CD4-positive, alpha-beta T cell (primary cell): ENCODE measurements at regions of chr19 and their contacts with region 1.

Region 1: GRCh38 chr19:44723952-44724319 is 24.6 kb upstream of the BCL3 start:
- DNase-seq: peak; percentile 57 to 89 (median 76)
- ATAC-seq: peak; percentile 95
- H3K4me3 ChIP-seq: no peak overlapping the region
- H3K4me3 Mint-ChIP-seq: no peak overlapping the region
- H3K27ac ChIP-seq: no peak overlapping the region
- H3K27ac Mint-ChIP-seq: no peak overlapping the region
- H3K4me1 ChIP-seq: peaks cover 27% of the 10 kb centered on the region
- H3K4me1 Mint-ChIP-seq: peaks cover 14% of the 10 kb centered on the region
- H3K27me3 ChIP-seq: peaks cover 0 to 3% of the 10 kb centered on the region in 2 experiments
- H3K27me3 Mint-ChIP-seq: no peaks in the 10 kb centered on the region
- CTCF ChIP-seq: peak; percentile 97

Region 2: DNA sequence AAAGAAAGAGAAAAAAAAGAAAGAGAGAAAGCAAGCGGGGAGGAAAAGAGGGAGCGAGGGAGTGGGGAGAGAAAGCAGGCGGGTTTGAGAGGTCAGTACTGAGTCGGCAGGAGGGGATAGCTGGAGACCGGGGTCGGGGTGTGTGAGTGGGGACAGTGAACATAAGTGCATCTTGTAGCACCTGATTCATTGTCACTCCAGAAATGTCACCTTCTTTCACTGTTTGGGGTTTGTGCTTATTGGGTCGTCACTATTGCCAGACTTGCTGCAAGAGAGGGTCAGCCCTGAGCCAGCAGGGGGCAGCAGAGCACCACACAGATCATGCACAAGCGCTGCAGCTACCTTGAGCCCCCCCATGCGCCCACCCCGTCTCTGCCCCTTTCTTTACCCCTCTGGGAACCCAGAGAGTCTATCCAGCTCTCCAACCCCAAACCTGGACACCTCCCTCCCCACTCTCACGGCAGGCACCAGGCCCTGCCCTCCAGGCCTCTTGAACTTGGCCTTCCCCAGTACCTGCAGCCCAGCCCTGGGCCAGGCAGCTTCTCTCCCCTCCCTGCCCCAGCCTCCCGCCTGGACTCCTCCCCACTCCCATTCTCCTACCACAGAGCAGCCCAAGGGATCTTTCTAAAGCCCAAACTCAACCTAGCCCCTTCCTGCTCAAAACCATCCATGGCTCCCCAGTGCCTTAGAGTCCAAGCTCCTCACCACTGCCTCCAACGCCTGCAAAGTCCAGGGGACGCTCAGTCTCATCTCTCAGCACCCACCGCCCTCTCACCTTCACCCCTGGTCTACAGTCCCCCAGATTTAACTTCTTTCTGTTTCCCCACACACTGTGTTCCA is 34.7 kb before region 1 on chr19:
- CTCF ChIA-PET with region 1: interaction called, 49 read pairs
- POLR2A ChIA-PET with region 1: interaction called, 5 read pairs
- intact Hi-C with region 1: loop called in 1 of 2 experiments (anchors 1 kb)
- DNase-seq: peak; percentile 67 to 90 (median 76)
- ATAC-seq: peak; percentile 54
- H3K4me3 ChIP-seq: no peak overlapping the region
- H3K4me3 Mint-ChIP-seq: no peak overlapping the region
- H3K27ac ChIP-seq: no peak overlapping the region
- H3K27ac Mint-ChIP-seq: no peak overlapping the region
- H3K4me1 ChIP-seq: peaks cover 32% of the 10 kb centered on the region
- H3K4me1 Mint-ChIP-seq: peaks cover 35% of the 10 kb centered on the region
- H3K27me3 ChIP-seq: no peaks in the 10 kb centered on the region
- H3K27me3 Mint-ChIP-seq: peaks cover 23% of the 10 kb centered on the region
- CTCF ChIP-seq: peak; percentile 87

Region 3: DNA sequence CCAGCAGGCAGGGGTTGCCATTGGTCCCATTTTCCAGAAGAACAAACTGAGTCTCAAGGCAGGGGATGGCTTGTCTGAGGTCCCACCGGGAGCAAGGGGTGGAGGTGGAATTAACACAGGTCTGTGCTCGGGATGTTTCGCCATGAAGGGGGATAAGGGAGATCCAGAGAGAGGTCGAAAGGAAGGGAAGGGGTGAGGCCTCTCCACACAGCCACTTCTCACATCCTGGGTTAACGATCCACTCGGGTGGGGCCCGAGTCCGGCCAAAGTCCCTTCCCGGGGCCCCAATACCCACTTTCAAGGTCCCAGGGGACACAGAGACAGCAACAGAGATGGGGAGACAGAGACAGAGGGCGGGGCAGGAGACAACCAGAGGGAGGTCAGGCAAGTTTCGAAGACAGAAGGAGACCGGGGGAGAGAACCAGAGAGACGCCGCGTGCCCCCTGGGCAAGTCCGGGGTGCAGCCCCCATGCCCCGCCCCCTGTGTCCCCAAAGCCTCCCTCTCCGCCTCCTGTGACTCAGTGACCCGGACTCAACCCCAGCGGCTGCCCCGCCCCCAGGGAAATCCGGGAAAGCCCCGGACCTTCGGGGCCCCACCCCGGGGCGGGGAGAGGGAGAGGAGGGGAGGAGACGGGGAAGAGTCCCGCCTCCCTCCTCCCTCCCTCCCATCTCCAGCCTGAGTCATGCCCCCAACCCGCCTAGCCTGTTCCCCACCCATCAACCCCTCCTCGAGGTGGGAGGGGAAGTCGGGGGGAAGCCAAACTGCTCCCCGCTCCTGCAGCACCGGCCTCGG is 23.2 kb after region 1 on chr19:
- CTCF ChIA-PET with region 1: interaction called, 28 read pairs
- POLR2A ChIA-PET with region 1: interaction called, 3 read pairs
- intact Hi-C with region 1: loop called in 1 of 2 experiments (anchors 2 kb)
- DNase-seq: peak; percentile 67 to 96 (median 88)
- ATAC-seq: peak; percentile 74
- H3K4me3 ChIP-seq: peak overlapping the region; percentile 76
- H3K4me3 Mint-ChIP-seq: peak overlapping the region; percentile 94
- H3K27ac ChIP-seq: peak overlapping the region; percentile 90 to 92
- H3K27ac Mint-ChIP-seq: peak overlapping the region; percentile 91
- H3K4me1 ChIP-seq: peaks cover 57% of the 10 kb centered on the region
- H3K4me1 Mint-ChIP-seq: peaks cover 52% of the 10 kb centered on the region
- H3K27me3 ChIP-seq: no peaks in the 10 kb centered on the region
- H3K27me3 Mint-ChIP-seq: no peaks in the 10 kb centered on the region
- CTCF ChIP-seq: no peak

Region 4: DNA sequence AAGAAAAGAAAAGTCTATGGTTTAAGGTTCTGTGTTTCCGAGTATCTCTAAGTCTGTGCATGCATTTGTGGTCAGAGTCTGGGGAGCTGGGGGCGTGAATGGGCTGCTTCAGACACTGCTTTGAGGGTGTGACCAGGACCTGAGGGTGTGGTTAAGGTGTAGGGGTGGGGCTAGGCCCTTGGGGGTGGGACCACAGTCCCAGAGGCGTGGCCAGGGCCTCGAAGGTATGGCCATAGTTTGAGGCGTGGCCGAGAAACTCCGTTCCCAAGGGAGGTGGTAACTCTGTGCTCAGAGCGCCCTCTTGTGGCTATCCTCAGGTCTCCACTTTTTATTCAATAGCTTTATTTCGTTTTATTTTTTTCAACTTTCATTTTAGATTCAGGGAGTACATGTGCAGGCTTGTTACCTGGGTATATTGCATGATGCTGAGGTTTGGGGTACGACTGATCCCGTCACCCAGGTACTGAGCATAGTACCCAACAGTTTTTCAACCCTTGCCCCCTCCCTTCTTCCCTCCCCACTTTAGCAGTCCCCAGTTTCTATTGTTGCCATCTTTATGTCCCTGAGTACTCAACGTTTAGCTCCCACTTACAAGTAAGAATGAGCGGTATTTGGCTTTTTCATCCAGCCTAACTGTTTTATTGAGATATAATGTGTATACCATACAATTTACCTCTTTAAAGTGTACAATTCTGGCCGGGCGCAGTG is 46.8 kb after region 1 on chr19:
- CTCF ChIA-PET with region 1: interaction called, 325 read pairs
- POLR2A ChIA-PET with region 1: interaction called, 52 read pairs
- intact Hi-C with region 1: loop called (anchors 1 kb)
- DNase-seq: peak; percentile 95 to 99 (median 98)
- ATAC-seq: peak; percentile 99
- H3K4me3 ChIP-seq: no peak overlapping the region
- H3K4me3 Mint-ChIP-seq: peak overlapping the region; percentile 40
- H3K27ac ChIP-seq: no peak overlapping the region
- H3K27ac Mint-ChIP-seq: peak overlapping the region; percentile 65
- H3K4me1 ChIP-seq: peaks cover 21% of the 10 kb centered on the region
- H3K4me1 Mint-ChIP-seq: peaks cover 14% of the 10 kb centered on the region
- H3K27me3 ChIP-seq: no peaks in the 10 kb centered on the region
- H3K27me3 Mint-ChIP-seq: no peaks in the 10 kb centered on the region
- CTCF ChIP-seq: peak; percentile 73

Region 5: DNA sequence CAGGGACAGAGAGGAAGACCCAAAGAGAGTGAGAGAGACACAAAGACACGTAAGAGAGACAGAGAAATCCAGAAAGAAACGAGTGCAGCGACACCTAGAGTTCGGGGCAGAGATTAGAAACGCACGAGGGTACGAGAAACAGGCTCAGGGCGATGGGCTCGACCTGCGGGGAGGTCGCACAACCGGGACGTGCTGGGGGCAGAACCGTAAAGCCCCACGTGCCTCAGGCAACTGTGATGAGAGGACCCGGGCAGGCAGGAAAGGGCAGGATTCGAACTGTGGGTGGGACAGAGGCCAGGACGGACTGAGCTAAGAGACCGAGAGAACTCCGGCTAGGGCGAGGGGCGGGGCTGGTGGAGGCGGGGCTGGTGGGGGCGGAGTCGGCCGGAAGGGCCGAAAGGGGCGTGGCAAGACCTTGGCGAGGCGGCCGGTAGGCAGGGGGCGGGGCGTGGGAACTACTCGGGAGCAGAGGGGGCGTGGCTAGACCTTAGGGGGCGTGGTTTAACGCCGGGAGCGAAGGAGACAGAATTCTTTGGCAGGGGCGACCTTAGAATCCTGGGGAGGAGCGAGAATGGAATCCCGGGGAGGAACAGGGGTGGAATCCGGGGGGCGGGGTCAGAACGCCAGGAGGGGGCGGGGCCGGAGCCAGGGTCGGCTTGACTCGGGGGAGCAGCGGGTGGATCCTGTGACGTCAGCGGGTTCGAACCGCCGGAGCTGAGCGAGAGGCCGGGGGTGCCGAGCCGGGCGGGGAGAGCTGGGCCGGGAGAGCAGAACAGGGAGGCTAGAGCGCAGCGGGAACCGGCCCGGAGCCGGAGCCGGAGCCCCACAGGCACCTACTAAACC is 121.9 kb after region 1 on chr19 and contains the start of gene NECTIN2:
- CTCF ChIA-PET with region 1: interaction called, 7 read pairs
- POLR2A ChIA-PET with region 1: no interaction called
- intact Hi-C with region 1: loop called (anchors 1 to 5 kb)
- DNase-seq: peak; percentile 30 to 86 (median 64)
- ATAC-seq: peak; percentile 68
- H3K4me3 ChIP-seq: peak within 1 kb of the TSS; percentile 47
- H3K4me3 Mint-ChIP-seq: peak within 1 kb of the TSS; percentile 85
- H3K27ac ChIP-seq: no peak within 1 kb of the TSS
- H3K27ac Mint-ChIP-seq: peak within 1 kb of the TSS; percentile 49
- H3K4me1 ChIP-seq: peaks cover 52% of the 10 kb centered on the region
- H3K4me1 Mint-ChIP-seq: peaks cover 34% of the 10 kb centered on the region
- H3K27me3 ChIP-seq: peaks cover 11 to 20% of the 10 kb centered on the region in 2 experiments
- H3K27me3 Mint-ChIP-seq: peaks cover 21% of the 10 kb centered on the region
- CTCF ChIP-seq: no peak
- total RNA-seq, gene NECTIN2: 1.8 to 1.9 TPM

Region 6: GRCh38 chr19:45008552-45008951 is 284.6 kb after region 1 on chr19:
- CTCF ChIA-PET with region 1: no interaction called
- POLR2A ChIA-PET with region 1: no interaction called
- intact Hi-C with region 1: no loop called
- DNase-seq: no peak
- ATAC-seq: no peak
- H3K4me3 ChIP-seq: no peak overlapping the region
- H3K4me3 Mint-ChIP-seq: no peak overlapping the region
- H3K27ac ChIP-seq: no peak overlapping the region
- H3K27ac Mint-ChIP-seq: no peak overlapping the region
- H3K4me1 ChIP-seq: no peaks in the 10 kb centered on the region
- H3K4me1 Mint-ChIP-seq: no peaks in the 10 kb centered on the region
- H3K27me3 ChIP-seq: no peaks in the 10 kb centered on the region
- H3K27me3 Mint-ChIP-seq: no peaks in the 10 kb centered on the region
- CTCF ChIP-seq: no peak